ENCODE measurements at regions of chr10 and their contacts with region 1.

Region 1: DNA sequence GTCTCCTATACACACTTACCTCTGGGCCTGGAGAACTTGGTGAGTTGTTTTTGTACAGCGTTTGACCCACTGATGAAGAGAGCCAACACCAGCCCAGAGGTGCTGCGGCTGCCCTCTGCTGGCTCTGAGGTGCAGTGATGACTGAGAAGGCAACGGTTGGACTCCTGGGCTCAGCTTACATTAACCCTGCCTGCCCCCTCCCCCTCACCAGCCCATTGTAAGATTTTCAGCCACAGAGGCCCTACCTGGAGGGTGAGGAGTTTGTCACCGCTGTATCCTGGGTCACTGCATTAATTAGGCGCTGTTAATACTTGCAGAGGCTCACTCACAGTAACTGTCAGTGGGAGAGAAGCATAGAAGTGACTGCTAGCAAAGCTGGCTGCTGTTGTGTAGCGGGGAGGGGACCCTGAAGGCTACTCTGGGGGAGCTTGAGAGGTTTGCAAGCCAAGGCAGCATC is 19.0 kb upstream of the ANKRD2 start:
- DNase-seq: peak; percentile 68 to 92 (median 84)
- ATAC-seq: peak; percentile 91
- H3K4me3 ChIP-seq: no peak overlapping the region
- H3K27ac ChIP-seq: no peak overlapping the region
- H3K4me1 ChIP-seq: peaks cover 12% of the 10 kb centered on the region
- H3K27me3 ChIP-seq: no peaks in the 10 kb centered on the region

Region 2: DNA sequence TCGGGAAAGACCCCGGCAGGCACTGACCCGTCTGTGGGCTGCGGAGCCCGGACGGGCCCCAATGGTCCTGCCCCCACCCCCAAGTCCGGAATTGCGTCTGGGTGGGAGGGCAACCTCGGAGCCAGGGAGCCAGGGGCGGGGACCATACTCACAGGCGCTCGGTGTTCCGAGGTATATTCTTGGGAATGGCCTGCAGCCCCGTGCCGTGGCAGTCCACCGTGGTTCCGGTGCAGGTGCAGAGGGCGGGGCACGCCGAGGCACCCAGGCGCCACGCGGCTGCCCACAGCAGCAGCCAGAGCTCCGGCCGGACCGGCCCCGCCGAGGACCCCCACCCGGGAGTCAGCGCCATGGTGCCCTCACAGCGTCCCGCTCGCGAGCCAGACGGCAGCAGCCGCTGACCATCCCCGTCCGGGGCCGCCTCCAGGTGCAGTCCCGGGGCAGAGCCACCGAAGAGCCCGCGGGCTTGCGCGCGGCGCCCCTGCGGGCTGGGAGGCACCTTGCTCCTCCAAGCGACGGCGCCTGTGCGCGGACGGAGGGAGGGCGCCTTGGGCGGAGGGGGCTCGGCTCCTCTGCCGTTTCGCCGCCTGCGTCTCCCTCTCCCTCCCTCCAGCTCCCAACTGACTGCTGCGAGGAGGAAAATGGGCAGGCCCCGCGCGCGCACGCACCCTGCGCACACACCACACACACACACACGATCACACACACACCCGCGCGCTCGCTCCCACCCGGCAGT is 368.1 kb before region 1 on chr10 and contains the start of gene SLIT1:
- intact Hi-C with region 1: no loop called
- DNase-seq: no peak
- ATAC-seq: peak in 1 of 2 donors; percentile 25
- H3K4me3 ChIP-seq: peak within 1 kb of the TSS; percentile 13
- H3K27ac ChIP-seq: no peak within 1 kb of the TSS
- H3K4me1 ChIP-seq: no peaks in the 10 kb centered on the region
- H3K27me3 ChIP-seq: no peaks in the 10 kb centered on the region
- total RNA-seq, gene SLIT1: 0.11 to 0.29 (median 0.17) TPM

Region 3: GRCh38 chr10:97365761-97366351 is 187.7 kb before region 1 on chr10:
- intact Hi-C with region 1: no loop called
- DNase-seq: no peak
- ATAC-seq: peak; percentile 6 to 26
- H3K4me3 ChIP-seq: no peak overlapping the region
- H3K27ac ChIP-seq: no peak overlapping the region
- H3K4me1 ChIP-seq: no peaks in the 10 kb centered on the region
- H3K27me3 ChIP-seq: no peaks in the 10 kb centered on the region

Region 4: GRCh38 chr10:97463363-97464132 is 90.1 kb before region 1 on chr10:
- intact Hi-C with region 1: loop called (anchors 5 to 10 kb)
- DNase-seq: no peak
- ATAC-seq: peak; percentile 42 to 46
- H3K4me3 ChIP-seq: no peak overlapping the region
- H3K27ac ChIP-seq: no peak overlapping the region
- H3K4me1 ChIP-seq: peaks cover 6% of the 10 kb centered on the region
- H3K27me3 ChIP-seq: no peaks in the 10 kb centered on the region

Region 5: GRCh38 chr10:97499561-97500296 is 53.9 kb before region 1 on chr10:
- intact Hi-C with region 1: loop called in 1 of 4 experiments (anchors 5 kb)
- DNase-seq: peak; percentile 86 to 95 (median 92)
- ATAC-seq: no peak
- H3K4me3 ChIP-seq: peak overlapping the region; percentile 53
- H3K27ac ChIP-seq: peak overlapping the region; percentile 94
- H3K4me1 ChIP-seq: peaks cover 23% of the 10 kb centered on the region
- H3K27me3 ChIP-seq: no peaks in the 10 kb centered on the region

Region 6: GRCh38 chr10:97648562-97649404 is 95.2 kb after region 1 on chr10:
- intact Hi-C with region 1: no loop called
- DNase-seq: no peak
- ATAC-seq: peak; percentile 73 to 79
- H3K4me3 ChIP-seq: no peak overlapping the region
- H3K27ac ChIP-seq: peak overlapping the region; percentile 36
- H3K4me1 ChIP-seq: no peaks in the 10 kb centered on the region
- H3K27me3 ChIP-seq: no peaks in the 10 kb centered on the region

Measured in right cardiac atrium (tissue), 5 donors.